ENCODE measurements at regions of chr2 and their contacts with region 1.

Region 1: GRCh38 chr2:60794277-60794863 is 38.3 kb downstream of the PAPOLG start:
- DNase-seq: no peak
- H3K4me3 ChIP-seq: no peak overlapping the region
- H3K27ac ChIP-seq: no peak overlapping the region
- H3K4me1 ChIP-seq: no peaks in the 10 kb centered on the region
- H3K27me3 ChIP-seq: no peaks in the 10 kb centered on the region
- CTCF ChIP-seq: peak; percentile 50

Region 2: DNA sequence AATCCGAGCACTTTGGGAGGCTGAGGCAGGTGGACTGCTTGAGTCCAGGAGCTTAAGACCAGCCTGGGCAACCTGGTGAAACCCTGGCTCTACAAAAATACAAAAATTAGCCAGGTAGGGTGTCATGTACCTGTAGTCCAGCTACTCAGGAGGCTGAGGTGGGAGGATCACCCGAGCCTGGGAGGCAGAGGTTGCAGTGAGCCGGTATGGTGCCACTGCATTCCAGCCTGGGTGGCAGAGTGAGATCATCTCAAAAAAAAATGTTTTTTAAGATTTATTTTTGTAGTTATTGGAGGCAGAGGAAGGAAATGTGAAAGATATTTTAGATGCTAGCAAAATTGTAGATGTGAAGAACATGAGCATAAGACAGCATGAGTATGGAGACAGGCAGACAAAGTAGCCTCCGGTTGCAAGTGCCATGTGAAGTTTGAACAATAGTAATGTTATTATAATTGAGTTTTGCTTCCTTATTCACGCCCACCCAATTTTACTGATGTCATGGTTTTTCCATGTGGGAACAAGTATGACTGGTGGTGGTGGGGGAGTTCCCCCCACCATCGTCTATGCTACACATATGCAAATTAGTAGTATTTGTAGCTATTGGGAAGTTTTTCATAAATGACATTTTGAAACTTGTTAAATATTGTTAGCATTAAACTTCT is 105.0 kb after region 1 on chr2:
- intact Hi-C with region 1: loop called (anchors 10 kb)
- DNase-seq: no peak
- H3K4me3 ChIP-seq: no peak overlapping the region
- H3K27ac ChIP-seq: no peak overlapping the region
- H3K4me1 ChIP-seq: no peaks in the 10 kb centered on the region
- H3K27me3 ChIP-seq: no peaks in the 10 kb centered on the region
- CTCF ChIP-seq: no peak

Region 3: DNA sequence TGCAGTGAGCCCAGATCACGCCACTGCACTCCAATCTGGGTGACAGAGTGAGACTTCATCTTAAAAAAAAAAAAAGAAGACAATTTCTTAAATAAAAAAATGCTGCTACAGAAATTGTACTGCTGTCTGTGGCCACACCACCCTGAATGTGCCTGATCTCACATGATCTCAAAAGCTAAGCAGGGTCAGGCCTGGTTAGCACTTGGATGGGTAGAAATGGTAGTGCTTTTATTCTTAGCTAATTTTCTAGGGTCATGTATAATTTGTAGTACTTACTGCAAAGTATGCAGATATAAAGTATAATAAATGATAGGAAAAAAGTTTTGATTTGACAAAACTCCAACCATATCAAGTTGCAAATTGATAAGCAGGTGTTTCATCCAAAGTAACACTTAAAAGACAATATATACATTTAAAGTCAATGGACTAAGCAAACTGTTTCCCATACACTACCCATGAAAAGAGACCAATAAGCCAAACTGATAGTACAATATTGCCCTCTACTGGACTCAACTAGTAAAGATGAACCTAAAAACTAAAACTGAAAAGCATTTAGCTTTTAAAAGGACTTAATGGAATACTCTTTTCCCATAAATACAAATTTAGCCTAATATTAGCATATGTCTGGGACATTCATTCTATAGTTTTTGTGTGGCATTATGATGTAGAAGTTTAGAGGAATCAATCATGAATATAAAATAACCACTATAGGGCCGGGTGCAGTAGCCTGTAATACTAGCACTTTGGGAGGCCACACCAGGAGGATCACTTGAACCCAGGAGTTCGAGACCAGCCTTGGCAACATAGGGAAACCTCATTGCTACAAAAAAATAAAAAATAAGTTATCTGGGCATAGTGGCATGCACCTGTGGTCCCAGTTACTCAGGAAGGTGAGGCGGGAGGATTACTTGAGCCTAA is 204.5 kb after region 1 on chr2:
- intact Hi-C with region 1: loop called (anchors 10 kb)
- DNase-seq: no peak
- H3K4me3 ChIP-seq: no peak overlapping the region
- H3K27ac ChIP-seq: no peak overlapping the region
- H3K4me1 ChIP-seq: peaks cover 9% of the 10 kb centered on the region
- H3K27me3 ChIP-seq: no peaks in the 10 kb centered on the region
- CTCF ChIP-seq: peak; percentile 74

Measured in left ventricle myocardium inferior (tissue), 1 donor.